Prostate gland (tissue), 2 donors: ENCODE measurements at regions of chr10 and their contacts with region 1.

Region 1: DNA sequence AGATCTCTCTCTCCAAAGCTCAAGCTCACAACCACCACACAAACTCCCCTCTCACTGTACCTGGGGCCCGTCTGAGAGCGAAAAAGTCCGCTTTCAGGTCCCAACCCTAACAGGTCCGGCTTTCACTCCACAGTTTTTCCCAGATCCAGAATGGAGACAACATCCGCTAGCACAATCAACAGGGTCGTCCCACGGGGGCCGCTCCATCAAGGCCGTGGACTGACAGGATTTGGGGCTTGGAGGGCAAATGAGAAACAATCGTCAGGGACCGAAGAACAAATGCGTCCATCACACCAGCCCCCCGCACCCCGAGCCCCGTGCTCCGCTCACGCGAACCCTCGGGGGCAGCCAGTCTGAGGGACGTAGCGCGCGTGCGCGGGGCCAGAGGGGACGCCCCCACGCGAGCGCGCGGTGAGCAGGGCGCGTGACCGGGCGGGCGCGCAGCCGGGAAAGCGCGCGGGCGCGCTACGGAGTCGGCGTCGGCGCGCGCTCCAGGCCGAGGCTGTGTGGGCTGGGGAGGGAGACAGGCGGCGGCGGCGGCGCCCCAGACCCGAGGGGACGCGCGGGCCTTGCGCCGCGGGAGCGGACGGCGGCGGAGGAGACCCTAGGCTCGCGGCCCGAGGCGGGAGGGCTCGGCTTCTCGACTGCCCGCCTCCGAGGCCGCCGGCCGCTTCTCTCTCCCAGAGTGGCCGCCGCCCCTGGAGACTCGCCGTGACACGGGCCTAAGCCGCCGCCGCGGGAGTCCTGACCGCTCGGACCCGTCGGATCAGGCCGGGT is at the start of gene SLK:
- DNase-seq: peak; percentile 76
- H3K4me3 ChIP-seq: peak within 1 kb of the TSS; percentile 94 to 95
- H3K27ac ChIP-seq: peak within 1 kb of the TSS; percentile 94 to 95
- H3K4me1 ChIP-seq: no peaks in the 10 kb centered on the region
- H3K27me3 ChIP-seq: no peaks in the 10 kb centered on the region
- CTCF ChIP-seq: peak in 1 of 4 experiments; percentile 18
- POLR2A ChIP-seq: peak; percentile 96
- total RNA-seq, gene SLK: 30.7 to 55.8 TPM

Region 2: GRCh38 chr10:103918053-103918846 is 48.6 kb before region 1 on chr10 and contains the start of gene STN1:
- intact Hi-C with region 1: loop called (anchors 1 kb)
- DNase-seq: peak; percentile 97
- H3K4me3 ChIP-seq: peak within 1 kb of the TSS; percentile 56 to 63
- H3K27ac ChIP-seq: peak within 1 kb of the TSS; percentile 84 to 94
- H3K4me1 ChIP-seq: peaks cover 7% of the 10 kb centered on the region
- H3K27me3 ChIP-seq: no peaks in the 10 kb centered on the region
- CTCF ChIP-seq: no peak
- POLR2A ChIP-seq: peak; percentile 89
- total RNA-seq, gene STN1: 15.5 to 42.7 TPM

Region 3: GRCh38 chr10:104080762-104081161 is 113.9 kb after region 1 on chr10:
- intact Hi-C with region 1: no loop called
- DNase-seq: no peak
- H3K4me3 ChIP-seq: no peak overlapping the region
- H3K27ac ChIP-seq: no peak overlapping the region
- H3K4me1 ChIP-seq: no peaks in the 10 kb centered on the region
- H3K27me3 ChIP-seq: no peaks in the 10 kb centered on the region
- CTCF ChIP-seq: peak in 1 of 4 experiments; percentile 30
- POLR2A ChIP-seq: no peak

Region 4: GRCh38 chr10:104121520-104122224 is 154.8 kb after region 1 on chr10 and contains the start of gene SFR1:
- intact Hi-C with region 1: loop called (anchors 5 kb)
- DNase-seq: peak; percentile 99
- H3K4me3 ChIP-seq: peak within 1 kb of the TSS; percentile 63 to 71
- H3K27ac ChIP-seq: peak within 1 kb of the TSS; percentile 93 to 98
- H3K4me1 ChIP-seq: peaks cover 3% of the 10 kb centered on the region
- H3K27me3 ChIP-seq: no peaks in the 10 kb centered on the region
- CTCF ChIP-seq: peak; percentile 48 to 83 (median 64)
- POLR2A ChIP-seq: peak; percentile 87
- total RNA-seq, gene SFR1: 8.1 to 16.3 TPM

Region 5: DNA sequence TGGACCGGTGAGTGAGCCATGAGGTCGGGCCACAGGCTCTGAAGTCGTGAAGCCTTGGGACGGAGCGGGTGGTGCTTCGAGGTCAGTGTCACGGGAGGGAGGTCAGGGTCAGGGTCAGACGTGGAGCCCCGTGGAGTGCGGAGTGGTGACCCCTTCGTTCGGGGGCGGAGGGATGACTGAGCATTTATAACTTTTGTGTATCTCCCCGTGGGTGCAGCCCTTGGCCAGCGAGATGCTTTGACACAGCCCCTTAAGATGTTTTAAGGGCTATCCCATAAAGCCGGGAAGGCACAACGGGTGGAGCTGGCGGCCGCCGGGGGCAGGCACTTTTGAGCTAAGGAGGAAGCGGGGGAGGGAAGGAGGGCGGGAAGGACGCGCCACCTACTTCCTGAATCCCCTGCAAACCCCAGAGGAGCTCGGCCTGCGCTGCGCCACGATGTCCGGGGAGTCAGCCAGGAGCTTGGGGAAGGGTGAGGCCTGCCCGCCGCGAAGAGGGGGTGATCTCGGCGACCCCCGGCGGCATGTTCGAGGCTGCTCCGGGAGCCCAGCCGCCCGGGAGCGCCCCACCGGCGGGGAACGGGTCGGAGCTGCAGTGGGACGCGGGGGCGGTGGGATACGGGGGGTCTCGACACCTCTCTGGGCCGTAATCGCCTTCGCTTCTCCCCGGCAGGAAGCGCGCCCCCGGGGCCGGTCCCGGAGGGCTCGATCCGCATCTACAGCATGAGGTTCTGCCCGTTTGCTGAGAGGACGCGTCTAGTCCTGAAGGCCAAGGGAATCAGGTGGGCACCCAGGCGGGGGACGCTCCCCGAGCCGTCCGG is 287.8 kb after region 1 on chr10 and contains the start of gene GSTO1:
- intact Hi-C with region 1: loop called (anchors 10 kb)
- DNase-seq: peak; percentile 74
- H3K4me3 ChIP-seq: peak within 1 kb of the TSS; percentile 77 to 87
- H3K27ac ChIP-seq: peak within 1 kb of the TSS; percentile 93 to 94
- H3K4me1 ChIP-seq: peaks cover 2% of the 10 kb centered on the region
- H3K27me3 ChIP-seq: no peaks in the 10 kb centered on the region
- CTCF ChIP-seq: peak in 2 of 4 experiments; percentile 11 to 33
- POLR2A ChIP-seq: peak; percentile 92
- total RNA-seq, gene GSTO1: 46.8 to 91.8 TPM